Activated B cell treated with CpG ODN at 0.5 μM for 24 hours (primary cell): ENCODE measurements at regions of chr4 and their contacts with region 1.

Region 1: GRCh38 chr4:128565565-128566186 is 243.8 kb upstream of the JADE1 start:
- DNase-seq: no peak
- ATAC-seq: no peak
- H3K4me3 Mint-ChIP-seq: no peak overlapping the region
- H3K27ac Mint-ChIP-seq: no peak overlapping the region
- H3K4me1 Mint-ChIP-seq: no peaks in the 10 kb centered on the region
- H3K27me3 Mint-ChIP-seq: peaks cover 6% of the 10 kb centered on the region
- CTCF ChIP-seq: no peak

Region 2: GRCh38 chr4:128191115-128191781 is 374.4 kb before region 1 on chr4:
- CTCF ChIA-PET with region 1: interaction called, 4 read pairs
- POLR2A ChIA-PET with region 1: no interaction called
- intact Hi-C with region 1: loop called (anchors 1 kb)
- DNase-seq: peak; percentile 31
- ATAC-seq: peak; percentile 92
- H3K4me3 Mint-ChIP-seq: no peak overlapping the region
- H3K27ac Mint-ChIP-seq: no peak overlapping the region
- H3K4me1 Mint-ChIP-seq: no peaks in the 10 kb centered on the region
- H3K27me3 Mint-ChIP-seq: no peaks in the 10 kb centered on the region
- CTCF ChIP-seq: peak; percentile 79